ENCODE measurements at regions of chr5 and their contacts with region 1.

Region 1: GRCh38 chr5:50751064-50751657 is 84.7 kb downstream of the PARP8 start:
- DNase-seq: peak; percentile 41
- CTCF ChIP-seq: peak; percentile 71

Region 2: GRCh38 chr5:50733741-50734140 is 17.4 kb before region 1 on chr5:
- CTCF ChIA-PET with region 1: interaction called, 12 read pairs
- POLR2A ChIA-PET with region 1: no interaction called
- DNase-seq: no peak
- CTCF ChIP-seq: no peak

Region 3: GRCh38 chr5:50738864-50739263 is 12.3 kb before region 1 on chr5:
- CTCF ChIA-PET with region 1: interaction called, 18 read pairs
- POLR2A ChIA-PET with region 1: no interaction called
- DNase-seq: no peak
- CTCF ChIP-seq: no peak

Region 4: GRCh38 chr5:50767588-50767987 is 16.4 kb after region 1 on chr5:
- CTCF ChIA-PET with region 1: interaction called, 12 read pairs
- POLR2A ChIA-PET with region 1: no interaction called
- DNase-seq: no peak
- CTCF ChIP-seq: no peak